Heart left ventricle (tissue), 16 donors: ENCODE measurements at regions of chr2 and their contacts with region 1.

Region 1: DNA sequence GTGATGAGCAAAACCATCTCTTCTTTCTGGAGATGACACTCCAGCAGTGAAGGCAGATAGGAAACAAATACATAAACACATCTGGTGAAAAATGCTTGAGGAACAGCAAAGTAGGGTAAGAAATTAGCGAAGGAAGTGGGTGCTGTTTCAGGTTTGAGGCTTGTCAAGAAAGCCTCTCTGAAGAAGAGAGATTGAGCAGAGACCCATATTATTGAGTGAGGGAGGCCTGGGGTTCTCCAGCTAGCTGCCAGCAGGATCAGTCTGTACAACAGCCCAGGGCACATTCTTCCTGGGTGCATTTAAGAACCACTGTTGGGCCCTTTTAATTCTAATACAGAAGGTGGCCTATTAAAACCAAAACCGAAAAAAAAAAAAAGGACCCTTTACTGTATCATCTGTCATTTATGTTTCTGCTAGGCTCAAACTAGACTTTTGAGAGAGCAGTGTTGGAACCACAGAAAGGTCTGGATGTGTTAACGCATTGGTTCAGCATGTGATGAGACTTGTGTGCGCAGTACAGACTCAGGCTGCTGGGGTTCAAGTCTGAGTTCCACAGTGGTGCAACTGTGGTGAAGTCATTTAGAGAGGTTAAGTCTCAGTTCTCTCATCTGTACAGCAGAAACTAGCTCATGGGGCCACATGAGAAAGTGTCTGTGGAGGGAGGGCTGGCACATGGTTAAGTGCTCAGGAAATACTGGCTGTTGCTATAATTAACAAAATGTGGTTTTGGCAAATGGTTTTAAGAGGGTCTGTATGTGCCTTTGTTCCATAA is 28.9 kb downstream of the MGAT5 start:
- DNase-seq: no peak
- ATAC-seq: no peak
- H3K4me3 ChIP-seq: no peak overlapping the region
- H3K27ac ChIP-seq: peak overlapping the region in 5 of 12 donors; percentile 4 to 56 (median 5)
- H3K4me1 ChIP-seq: peaks cover 0 to 75% (median 50%) of the 10 kb centered on the region in 12 donors
- H3K27me3 ChIP-seq: no peaks in the 10 kb centered on the region
- CTCF ChIP-seq: no peak
- POLR2A ChIP-seq: no peak

Region 2: DNA sequence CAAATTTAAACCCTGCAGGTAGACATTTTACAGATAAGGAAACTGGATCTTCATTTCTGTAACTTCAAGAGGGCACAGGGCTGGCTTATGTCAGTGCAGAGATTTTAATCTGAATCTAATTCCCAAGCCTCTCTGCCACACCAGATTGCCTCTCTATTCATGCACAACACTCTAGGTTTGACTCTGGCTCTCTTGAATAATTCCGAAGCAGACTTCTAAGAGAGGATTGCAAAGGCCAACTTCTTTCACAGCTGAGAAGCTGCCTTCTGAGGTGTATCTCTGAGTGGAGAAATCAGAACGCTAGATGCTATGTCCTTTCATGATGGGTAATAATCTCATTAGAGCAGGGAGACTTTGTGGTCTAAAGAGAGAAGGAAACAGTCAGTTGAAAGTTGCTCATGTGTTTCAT is 49.1 kb before region 1 on chr2:
- intact Hi-C with region 1: no loop called
- DNase-seq: no peak
- ATAC-seq: no peak
- H3K4me3 ChIP-seq: no peak overlapping the region
- H3K27ac ChIP-seq: peak overlapping the region in 1 of 12 donors; percentile 74
- H3K4me1 ChIP-seq: peaks cover 0 to 58% (median 33%) of the 10 kb centered on the region in 12 donors
- H3K27me3 ChIP-seq: no peaks in the 10 kb centered on the region
- CTCF ChIP-seq: no peak
- POLR2A ChIP-seq: no peak

Region 3: GRCh38 chr2:134314681-134315368 is 32.0 kb after region 1 on chr2:
- intact Hi-C with region 1: loop called in 1 of 10 experiments (anchors 5 kb)
- DNase-seq: peak in 2 of 5 donors; percentile 35 to 51
- ATAC-seq: peak in 3 of 4 donors; percentile 35 to 39 (median 38)
- H3K4me3 ChIP-seq: no peak overlapping the region
- H3K27ac ChIP-seq: peak overlapping the region in 9 of 12 donors; percentile 2 to 70 (median 43)
- H3K4me1 ChIP-seq: peaks cover 0 to 71% (median 45%) of the 10 kb centered on the region in 12 donors
- H3K27me3 ChIP-seq: no peaks in the 10 kb centered on the region
- CTCF ChIP-seq: peak in 1 of 12 donors; percentile 18
- POLR2A ChIP-seq: no peak

Region 4: DNA sequence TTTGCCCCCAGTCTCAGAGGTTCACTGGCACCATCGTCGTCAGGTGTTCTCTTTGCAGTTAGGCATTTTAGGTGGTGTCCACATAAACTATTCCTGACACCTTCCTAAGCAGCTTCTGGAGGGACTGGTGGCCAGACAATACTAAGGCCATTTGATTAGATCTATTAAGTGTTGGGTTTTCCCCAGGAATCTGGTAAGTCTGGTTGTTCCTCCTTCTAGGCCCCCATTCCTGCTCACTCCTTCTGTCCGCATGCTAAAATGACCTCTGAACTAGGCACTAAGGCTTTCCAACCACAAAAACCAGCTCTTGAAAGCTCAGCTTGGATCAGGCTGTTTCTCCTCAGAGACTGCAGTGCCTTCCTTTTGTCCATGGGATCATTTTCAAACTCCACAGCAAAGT is 71.8 kb after region 1 on chr2:
- intact Hi-C with region 1: no loop called
- DNase-seq: no peak
- ATAC-seq: no peak
- H3K4me3 ChIP-seq: no peak overlapping the region
- H3K27ac ChIP-seq: no peak overlapping the region
- H3K4me1 ChIP-seq: peaks cover 0 to 12% (median 5%) of the 10 kb centered on the region in 12 donors
- H3K27me3 ChIP-seq: no peaks in the 10 kb centered on the region
- CTCF ChIP-seq: no peak
- POLR2A ChIP-seq: no peak

Region 5: DNA sequence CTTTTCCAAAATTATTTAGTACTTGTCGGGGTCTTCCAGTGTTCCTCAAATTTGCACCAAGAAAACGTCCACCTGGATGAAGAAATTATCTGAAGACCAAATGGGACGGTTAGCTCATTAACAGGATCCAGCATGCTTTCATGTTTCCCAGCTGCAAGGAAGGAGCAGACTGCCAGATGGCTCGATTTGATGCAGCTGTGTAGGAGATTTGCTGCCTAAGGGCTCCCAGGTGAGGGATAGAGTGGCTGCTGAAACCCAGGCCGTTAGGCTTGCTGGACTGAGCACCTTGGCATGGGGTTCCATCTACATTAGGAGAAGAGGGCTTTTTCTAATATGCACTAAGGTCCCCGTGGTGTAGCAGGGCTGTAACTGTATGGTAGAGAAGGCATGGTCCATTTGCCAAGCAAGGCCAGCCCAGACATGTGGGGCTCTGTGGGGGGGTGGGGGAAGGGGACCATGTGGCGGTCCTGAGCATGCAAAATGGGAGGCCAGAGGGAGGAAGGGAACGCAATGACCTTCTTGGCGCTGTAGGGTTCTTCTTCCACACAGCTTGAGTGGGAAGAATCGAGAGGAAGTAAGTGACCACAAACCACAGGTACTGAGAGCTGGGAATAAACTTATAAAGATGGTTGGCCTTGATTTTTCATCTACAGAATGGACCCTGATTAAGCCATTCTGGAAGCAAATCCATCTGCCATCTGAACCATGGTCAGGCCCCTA is 292.0 kb after region 1 on chr2:
- intact Hi-C with region 1: no loop called
- DNase-seq: no peak
- ATAC-seq: no peak
- H3K4me3 ChIP-seq: no peak overlapping the region
- H3K27ac ChIP-seq: no peak overlapping the region
- H3K4me1 ChIP-seq: no peaks in the 10 kb centered on the region
- H3K27me3 ChIP-seq: peaks cover 0 to 4% (median 0%) of the 10 kb centered on the region in 9 donors
- CTCF ChIP-seq: no peak
- POLR2A ChIP-seq: no peak